Left cardiac atrium (tissue), 4 donors: ENCODE measurements at regions of chr14 and their contacts with region 1.

Region 1: GRCh38 chr14:31207755-31208545 is at the start of gene HECTD1:
- DNase-seq: peak; percentile 91
- ATAC-seq: peak; percentile 94 to 96
- total RNA-seq, gene HECTD1: 121 to 178 TPM

Region 2: DNA sequence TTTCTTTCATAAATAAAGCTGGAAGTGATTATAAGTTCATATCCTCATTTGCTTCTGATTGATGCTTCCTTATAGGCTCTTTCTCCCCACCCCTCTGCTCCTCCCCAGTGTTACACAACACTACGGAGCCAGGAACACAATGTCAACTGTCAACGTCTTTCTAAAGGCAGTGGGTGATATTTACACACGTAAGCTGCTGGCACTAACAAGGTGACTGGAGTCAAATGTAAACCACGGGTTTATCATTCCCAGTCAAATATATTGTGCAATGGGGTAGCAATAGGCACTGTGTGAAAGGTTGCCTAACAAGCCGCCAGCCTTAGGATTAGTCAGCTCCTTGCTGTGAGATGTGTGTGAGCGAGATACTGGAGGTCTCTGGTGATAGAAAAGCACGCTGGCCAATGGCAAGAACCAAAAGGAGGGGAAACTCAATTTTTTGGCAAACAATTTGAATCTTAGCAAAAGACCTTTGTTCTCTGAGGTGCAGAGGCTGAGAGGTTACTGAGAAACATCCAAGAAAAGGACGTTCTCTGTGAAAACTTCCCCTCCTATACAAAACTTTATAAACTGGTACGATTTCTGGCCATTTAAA is 21.8 kb after region 1 on chr14:
- intact Hi-C with region 1: loop called in 1 of 2 experiments (anchors 2 kb)
- DNase-seq: peak; percentile 78
- ATAC-seq: peak; percentile 98 to 100

Region 3: DNA sequence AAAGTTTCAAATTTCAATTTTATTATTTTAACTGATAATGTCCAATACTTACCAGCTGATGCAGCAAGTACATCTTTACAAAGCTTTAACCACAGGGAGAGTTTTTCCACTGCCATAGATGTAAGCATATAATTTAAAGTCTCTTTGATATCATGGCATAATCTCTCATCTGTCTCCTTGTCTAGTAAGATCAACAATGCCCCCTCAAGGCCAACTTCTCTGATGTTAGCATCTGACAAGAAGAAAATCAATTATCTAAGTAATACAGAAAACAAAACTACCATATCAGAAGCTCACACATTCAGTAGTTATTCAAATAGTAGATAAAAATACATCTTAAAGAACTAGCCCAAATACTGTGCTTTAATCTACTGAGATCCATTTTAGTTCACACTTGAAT is 118.2 kb after region 1 on chr14:
- intact Hi-C with region 1: loop called in 1 of 2 experiments (anchors 10 kb)
- DNase-seq: no peak
- ATAC-seq: no peak

Region 4: GRCh38 chr14:31336652-31337051 is 128.7 kb after region 1 on chr14:
- intact Hi-C with region 1: no loop called
- DNase-seq: no peak
- ATAC-seq: no peak